ENCODE measurements at regions of chr7 and their contacts with region 1.

Region 1: GRCh38 chr7:79009647-79010046 is 443.8 kb downstream of the MAGI2 start:
- DNase-seq: peak; percentile 5
- ATAC-seq: peak; percentile 66
- H3K4me3 ChIP-seq: no peak overlapping the region
- H3K27ac ChIP-seq: no peak overlapping the region
- H3K4me1 ChIP-seq: no peaks in the 10 kb centered on the region
- H3K27me3 ChIP-seq: no peaks in the 10 kb centered on the region
- CTCF ChIP-seq: no peak
- POLR2A ChIP-seq: no peak
- RAD21 ChIP-seq: no peak

Region 2: GRCh38 chr7:78562191-78562590 is 447.5 kb before region 1 on chr7:
- CTCF ChIA-PET with region 1: interaction called, 10 read pairs
- POLR2A ChIA-PET with region 1: no interaction called
- dilution Hi-C with region 1: no loop called
- in situ Hi-C with region 1: no loop called
- intact Hi-C with region 1: no loop called
- DNase-seq: peak; percentile 50
- ATAC-seq: no peak
- H3K4me3 ChIP-seq: no peak overlapping the region
- H3K27ac ChIP-seq: no peak overlapping the region
- H3K4me1 ChIP-seq: no peaks in the 10 kb centered on the region; the same call in 1 of the 2 replicates
- H3K27me3 ChIP-seq: no peaks in the 10 kb centered on the region
- CTCF ChIP-seq: no peak
- POLR2A ChIP-seq: no peak
- RAD21 ChIP-seq: no peak

Measured in IMR-90 (cell line).